ENCODE measurements at regions of chr10 and their contacts with region 1.

Region 1: GRCh38 chr10:62264702-62265436 is 3.8 kb downstream of the RTKN2 start:
- DNase-seq: peak; percentile 69
- H3K4me3 ChIP-seq: no peak overlapping the region
- CTCF ChIP-seq: peak; percentile 55

Region 2: GRCh38 chr10:62233494-62234283 is 31.2 kb before region 1 on chr10:
- CTCF ChIA-PET with region 1: no interaction called
- POLR2A ChIA-PET with region 1: no interaction called
- DNase-seq: no peak
- H3K4me3 ChIP-seq: no peak overlapping the region
- CTCF ChIP-seq: no peak

Region 3: DNA sequence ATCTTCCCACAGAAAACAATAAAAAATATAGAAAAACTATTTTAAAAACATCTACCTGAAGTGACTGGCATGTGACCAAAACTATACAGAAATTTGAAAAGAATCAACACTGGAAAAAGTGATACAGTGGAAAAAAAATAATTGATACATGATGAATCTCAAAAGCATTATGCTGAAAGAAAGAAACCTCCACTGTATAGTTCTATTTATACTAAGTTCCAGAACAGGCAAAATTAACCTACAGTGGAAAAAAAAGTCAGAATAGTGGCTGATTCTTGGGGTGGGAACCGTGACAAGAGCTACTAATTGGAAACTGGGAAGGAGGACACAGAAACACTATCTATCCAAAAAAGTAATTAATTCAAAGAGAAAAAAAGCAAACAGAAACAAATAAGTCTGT is 11.2 kb before region 1 on chr10:
- CTCF ChIA-PET with region 1: interaction called, 80 read pairs
- POLR2A ChIA-PET with region 1: no interaction called
- DNase-seq: no peak
- H3K4me3 ChIP-seq: no peak overlapping the region
- CTCF ChIP-seq: no peak

Region 4: DNA sequence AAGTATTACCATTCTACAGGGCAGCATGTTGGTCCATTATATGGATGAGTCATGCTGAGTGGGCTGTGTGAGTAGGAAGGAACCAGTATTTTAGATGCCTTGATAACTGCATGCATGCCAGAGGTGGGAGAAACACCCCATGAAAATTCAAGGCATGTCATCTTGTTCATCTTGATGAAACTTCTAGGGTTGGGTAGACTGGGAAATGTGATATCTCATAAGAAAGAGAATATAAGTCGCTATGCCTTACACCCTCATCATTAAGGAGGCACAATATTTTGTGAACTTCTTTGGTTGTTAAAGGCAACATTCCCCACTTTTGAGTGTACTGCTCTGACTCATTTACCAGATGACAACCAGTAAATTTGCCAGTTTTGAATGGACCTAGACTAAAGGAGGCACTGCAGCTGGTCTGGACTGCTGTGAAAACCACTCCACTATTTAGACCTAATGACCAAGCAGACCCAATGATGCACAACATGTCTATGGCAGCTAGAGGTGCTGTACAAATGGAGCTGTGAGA is 157.3 kb after region 1 on chr10:
- CTCF ChIA-PET with region 1: interaction called, 12 read pairs
- POLR2A ChIA-PET with region 1: no interaction called
- DNase-seq: peak; percentile 61
- H3K4me3 ChIP-seq: no peak overlapping the region
- CTCF ChIP-seq: no peak

Measured in AG04449 (cell line).